Breast epithelium (tissue), 4 donors: ENCODE measurements at regions of chr18 and their contacts with region 1.

Region 1: DNA sequence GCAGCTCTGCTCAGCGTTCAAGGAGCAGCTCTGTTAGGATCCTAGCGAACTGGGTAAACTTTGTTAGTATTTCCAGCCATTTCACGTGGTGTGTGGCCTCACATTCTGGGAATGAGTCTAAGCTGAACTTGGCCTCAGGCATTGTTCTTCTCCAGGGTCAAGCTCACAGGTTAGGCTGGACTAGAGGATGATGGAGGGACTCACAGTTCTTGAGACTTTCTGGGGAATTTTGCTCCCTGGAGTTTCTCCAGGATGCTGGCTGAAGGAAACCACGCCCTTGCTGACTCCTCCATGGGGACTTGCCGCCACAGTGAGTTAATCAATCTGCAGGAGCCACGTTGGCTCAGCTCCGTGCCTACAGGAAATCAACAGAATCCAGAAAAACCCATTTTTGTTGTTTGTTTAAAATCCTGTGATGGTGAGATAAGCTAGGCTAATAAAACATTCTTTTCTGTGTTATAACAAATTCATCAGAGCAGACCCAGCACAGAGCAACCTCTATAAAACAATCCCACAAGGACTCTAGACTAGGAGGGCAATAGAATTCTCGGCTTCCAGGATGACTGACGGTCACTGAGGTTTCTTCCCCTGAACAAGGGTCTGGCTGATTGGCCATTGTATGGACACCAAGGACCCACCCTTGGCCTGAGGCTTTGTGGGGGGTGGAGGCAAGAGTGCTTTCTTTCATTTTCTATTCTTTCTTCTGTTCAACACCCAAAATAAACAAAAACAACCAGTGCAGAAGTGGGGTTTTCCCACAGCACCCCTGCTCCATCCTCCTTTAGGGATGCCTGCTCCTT is 12.7 kb downstream of the CNDP1 start:
- DNase-seq: no peak
- H3K4me3 ChIP-seq: no peak overlapping the region
- H3K27ac ChIP-seq: peak overlapping the region; percentile 25 to 76
- H3K4me1 ChIP-seq: no peaks in the 10 kb centered on the region
- H3K27me3 ChIP-seq: no peaks in the 10 kb centered on the region
- CTCF ChIP-seq: no peak
- POLR2A ChIP-seq: no peak

Region 2: GRCh38 chr18:74495581-74496507 is 51.1 kb before region 1 on chr18 and contains the start of gene CNDP2:
- intact Hi-C with region 1: loop called (anchors 2 kb)
- DNase-seq: peak; percentile 100
- H3K4me3 ChIP-seq: peak within 1 kb of the TSS; percentile 78 to 92 (median 89)
- H3K27ac ChIP-seq: peak within 1 kb of the TSS; percentile 97 to 98
- H3K4me1 ChIP-seq: no peaks in the 10 kb centered on the region
- H3K27me3 ChIP-seq: no peaks in the 10 kb centered on the region
- CTCF ChIP-seq: no peak
- POLR2A ChIP-seq: peak; percentile 81
- total RNA-seq, gene CNDP2: 81.0 to 104 (median 95.7) TPM